HepG2 (cell line): ENCODE measurements at regions of chr15 and their contacts with region 1.

Region 1: GRCh38 chr15:40421246-40422157 is 15.9 kb downstream of the IVD start:
- DNase-seq: peak; percentile 37
- ATAC-seq: peak; percentile 93
- H3K4me3 ChIP-seq: peak overlapping the region in 1 of 3 experiments; percentile 40; a peak in 1 of 6 replicates
- H3K27ac ChIP-seq: no peak overlapping the region
- H3K4me1 ChIP-seq: peaks cover 10% of the 10 kb centered on the region
- H3K27me3 ChIP-seq: no peaks in the 10 kb centered on the region; a peak in 1 of 5 replicates
- CTCF ChIP-seq: peak; percentile 95
- EP300 ChIP-seq: no peak
- POLR2A ChIP-seq: peak in 1 of 2 experiments; percentile 36; a peak in 1 of 4 replicates
- RAD21 ChIP-seq: peak; percentile 94

Region 2: DNA sequence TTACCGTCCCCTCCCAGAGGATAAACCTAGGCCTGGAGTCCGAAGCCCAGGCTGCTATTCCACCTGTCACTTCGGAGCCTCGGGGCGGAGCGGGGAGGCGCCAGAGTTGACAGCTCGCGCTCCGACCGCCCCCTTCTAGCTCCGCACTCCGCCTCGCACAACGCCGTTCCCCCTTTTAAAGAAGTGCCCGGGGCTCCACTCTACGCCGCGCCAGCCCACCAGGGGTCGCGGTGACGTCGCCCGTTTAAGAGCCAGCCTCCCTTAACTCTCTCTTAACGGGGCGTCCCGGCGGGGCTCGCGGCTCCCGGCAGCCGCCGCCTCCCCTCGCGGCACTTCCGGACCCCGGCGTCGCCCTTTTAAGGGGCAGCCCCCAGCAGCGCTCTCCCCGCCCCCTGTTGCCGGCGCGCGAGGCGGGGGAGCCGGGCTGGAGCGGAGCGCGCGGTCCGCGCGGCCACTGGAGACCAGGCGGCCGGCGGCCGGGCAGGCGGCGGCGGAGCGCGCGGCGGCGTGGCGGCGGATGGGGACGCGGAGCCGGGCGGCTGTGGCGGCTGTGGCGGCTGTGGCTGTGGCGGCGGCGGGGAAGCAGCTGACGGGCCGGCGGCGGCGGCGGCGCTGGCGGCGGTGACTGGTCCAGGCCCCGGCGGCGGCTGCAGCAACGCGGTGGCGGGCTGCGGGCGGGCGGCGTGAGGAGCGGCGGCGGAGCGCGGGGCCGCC is 98.1 kb before region 1 on chr15 and contains the start of gene INAFM2:
- CTCF ChIA-PET with region 1: interaction called, 13 read pairs
- POLR2A ChIA-PET with region 1: no interaction called
- in situ Hi-C with region 1: no loop called
- intact Hi-C with region 1: loop called (anchors 5 kb)
- DNase-seq: peak; percentile 89
- ATAC-seq: peak; percentile 94
- H3K4me3 ChIP-seq: peak within 1 kb of the TSS; percentile 36 to 75 (median 75); a peak in 5 of 6 replicates
- H3K27ac ChIP-seq: no peak within 1 kb of the TSS
- H3K4me1 ChIP-seq: peaks cover 48% of the 10 kb centered on the region
- H3K27me3 ChIP-seq: peaks cover 0 to 7% of the 10 kb centered on the region in 2 experiments; a peak in 1 of 5 replicates
- CTCF ChIP-seq: peak; percentile 72
- EP300 ChIP-seq: no peak
- POLR2A ChIP-seq: no peak
- RAD21 ChIP-seq: peak; percentile 48; the same call in 1 of the 2 replicates
- total RNA-seq, gene INAFM2: 6.5 and 8.1 TPM in 2 replicates

Region 3: DNA sequence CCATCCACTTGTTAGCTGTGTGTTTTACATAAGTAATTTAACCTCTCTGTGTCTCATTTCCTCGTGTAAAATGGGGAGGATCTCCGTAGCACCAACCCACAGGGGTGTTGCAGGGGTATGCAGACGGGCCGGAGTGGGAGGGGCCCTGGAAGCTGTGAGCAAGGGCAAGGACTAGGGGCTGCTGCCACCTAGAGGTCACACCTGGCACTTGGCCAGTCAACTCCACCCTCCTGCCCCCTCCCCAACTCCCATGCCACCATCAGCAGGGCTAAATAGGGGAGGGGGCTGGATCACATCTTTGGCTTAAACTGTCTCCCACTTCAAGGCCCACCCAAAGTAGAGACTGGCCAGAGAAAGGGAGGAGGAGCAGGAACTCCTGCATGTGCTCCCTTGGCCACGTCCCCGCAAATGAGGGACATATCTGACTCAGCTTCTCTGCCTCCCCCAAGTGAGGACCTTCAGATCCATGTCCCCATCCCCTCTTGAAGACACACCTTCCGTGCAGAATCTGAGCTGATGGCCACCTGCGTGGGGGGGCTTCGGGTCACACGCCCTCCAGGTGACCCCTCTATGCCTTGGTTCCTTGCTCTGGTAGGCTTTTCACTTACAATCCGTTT is 83.4 kb before region 1 on chr15:
- CTCF ChIA-PET with region 1: interaction called, 6 read pairs
- POLR2A ChIA-PET with region 1: interaction called, 3 read pairs
- in situ Hi-C with region 1: no loop called
- intact Hi-C with region 1: loop called (anchors 2 kb)
- DNase-seq: peak; percentile 58
- ATAC-seq: peak; percentile 51
- H3K4me3 ChIP-seq: no peak overlapping the region
- H3K27ac ChIP-seq: no peak overlapping the region
- H3K4me1 ChIP-seq: peaks cover 46% of the 10 kb centered on the region
- H3K27me3 ChIP-seq: no peaks in the 10 kb centered on the region
- CTCF ChIP-seq: peak; percentile 91
- EP300 ChIP-seq: no peak
- POLR2A ChIP-seq: no peak; a peak in 1 of 4 replicates
- RAD21 ChIP-seq: peak; percentile 76

Region 4: DNA sequence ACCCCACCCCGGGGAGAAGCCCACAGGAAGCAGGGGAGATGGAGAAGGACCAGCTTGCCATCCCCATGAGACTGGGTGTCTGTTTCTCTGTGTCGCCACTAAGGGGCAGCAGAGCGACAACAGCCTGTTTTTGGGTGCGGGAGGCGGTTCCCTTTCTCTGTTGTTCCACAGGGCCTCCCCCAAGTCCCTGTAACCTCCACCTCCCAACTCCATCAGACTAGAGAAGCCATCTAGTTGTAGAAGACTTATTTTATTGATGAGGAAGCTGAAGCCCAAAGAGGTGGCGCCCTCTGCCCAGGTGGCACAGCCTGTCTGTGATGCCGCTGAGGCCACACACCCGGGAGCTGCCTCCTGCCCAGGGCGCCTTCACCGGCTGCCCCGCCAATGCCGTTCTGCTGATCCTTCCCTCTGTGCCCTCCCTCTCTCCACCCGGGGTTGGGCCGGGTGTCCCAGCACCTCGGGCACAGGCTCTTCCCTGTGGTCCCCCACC is 76.8 kb before region 1 on chr15:
- CTCF ChIA-PET with region 1: interaction called, 11 read pairs
- POLR2A ChIA-PET with region 1: interaction called, 3 read pairs
- in situ Hi-C with region 1: loop called (anchors 5 kb)
- intact Hi-C with region 1: loop called (anchors 1 kb)
- DNase-seq: peak; percentile 45
- ATAC-seq: peak; percentile 4; the same call in 1 of the 3 replicates
- H3K4me3 ChIP-seq: peak overlapping the region in 1 of 3 experiments; percentile 2; a peak in 1 of 6 replicates
- H3K27ac ChIP-seq: no peak overlapping the region
- H3K4me1 ChIP-seq: peaks cover 83% of the 10 kb centered on the region
- H3K27me3 ChIP-seq: no peaks in the 10 kb centered on the region; a peak in 1 of 5 replicates
- CTCF ChIP-seq: peak; percentile 86
- EP300 ChIP-seq: no peak
- POLR2A ChIP-seq: no peak
- RAD21 ChIP-seq: peak; percentile 68

Region 5: GRCh38 chr15:40367686-40368611 is 53.6 kb before region 1 on chr15:
- CTCF ChIA-PET with region 1: interaction called, 32 read pairs
- POLR2A ChIA-PET with region 1: interaction called, 4 read pairs
- in situ Hi-C with region 1: no loop called
- intact Hi-C with region 1: loop called (anchors 1 kb)
- DNase-seq: peak; percentile 75
- ATAC-seq: peak; percentile 83
- H3K4me3 ChIP-seq: peak overlapping the region in 1 of 3 experiments; percentile 43; a peak in 1 of 6 replicates
- H3K27ac ChIP-seq: no peak overlapping the region
- H3K4me1 ChIP-seq: no peaks in the 10 kb centered on the region
- H3K27me3 ChIP-seq: peaks cover 14 to 84% of the 10 kb centered on the region in 2 experiments
- CTCF ChIP-seq: peak; percentile 88
- EP300 ChIP-seq: no peak
- POLR2A ChIP-seq: no peak
- RAD21 ChIP-seq: peak; percentile 94

Region 6: GRCh38 chr15:40825661-40826088 is 404.2 kb after region 1 on chr15:
- CTCF ChIA-PET with region 1: no interaction called
- POLR2A ChIA-PET with region 1: no interaction called
- in situ Hi-C with region 1: no loop called
- intact Hi-C with region 1: no loop called
- DNase-seq: peak; percentile 44
- ATAC-seq: peak; percentile 8; the same call in 1 of the 3 replicates
- H3K4me3 ChIP-seq: 0 out of 6 replicates have a peak overlapping the region, but pooled peaks of 1 of the 3 experiments have one; percentile 15
- H3K27ac ChIP-seq: no peak overlapping the region
- H3K4me1 ChIP-seq: peaks cover 64% of the 10 kb centered on the region
- H3K27me3 ChIP-seq: no peaks in the 10 kb centered on the region
- CTCF ChIP-seq: no peak
- EP300 ChIP-seq: no peak
- POLR2A ChIP-seq: no peak
- RAD21 ChIP-seq: no peak